A673 (cell line): ENCODE measurements at regions of chr1 and their contacts with region 1.

Region 1: GRCh38 chr1:5745776-5746610 is 246.2 kb downstream of the NPHP4 start:
- DNase-seq: peak; percentile 84
- H3K4me3 ChIP-seq: no peak overlapping the region
- H3K27ac ChIP-seq: no peak overlapping the region
- H3K4me1 ChIP-seq: peaks cover 22% of the 10 kb centered on the region
- H3K27me3 ChIP-seq: no peaks in the 10 kb centered on the region
- CTCF ChIP-seq: peak; percentile 97

Region 2: GRCh38 chr1:3906672-3907534 is 1839.1 kb before region 1 on chr1:
- CTCF ChIA-PET with region 1: no interaction called
- POLR2A ChIA-PET with region 1: no interaction called
- intact Hi-C with region 1: loop called (anchors 5 kb)
- DNase-seq: peak; percentile 40
- H3K4me3 ChIP-seq: no peak overlapping the region
- H3K27ac ChIP-seq: no peak overlapping the region
- H3K4me1 ChIP-seq: peaks cover 18% of the 10 kb centered on the region
- H3K27me3 ChIP-seq: peaks cover 5% of the 10 kb centered on the region
- CTCF ChIP-seq: 0 out of 2 replicates have a peak, but pooled peaks have one; percentile 22

Region 3: GRCh38 chr1:5758000-5758858 is 12.2 kb after region 1 on chr1:
- CTCF ChIA-PET with region 1: no interaction called
- POLR2A ChIA-PET with region 1: no interaction called
- intact Hi-C with region 1: no loop called
- DNase-seq: no peak
- H3K4me3 ChIP-seq: no peak overlapping the region
- H3K27ac ChIP-seq: no peak overlapping the region
- H3K4me1 ChIP-seq: no peaks in the 10 kb centered on the region
- H3K27me3 ChIP-seq: peaks cover 15% of the 10 kb centered on the region
- CTCF ChIP-seq: no peak